Motor neuron (in vitro differentiated cells): ENCODE measurements at regions of chr12 and their contacts with region 1.

Region 1: GRCh38 chr12:22083167-22083566 is 37.1 kb downstream of the CMAS start:
- ATAC-seq: peak in 5 of 8 experiments; percentile 31 to 52 (median 39)
- H3K4me3 ChIP-seq: no peak overlapping the region
- H3K27ac ChIP-seq: no peak overlapping the region
- H3K4me1 ChIP-seq: no peaks in the 10 kb centered on the region

Region 2: GRCh38 chr12:22334410-22335290 is 251.5 kb after region 1 on chr12 and contains the start of gene ST8SIA1:
- in situ Hi-C with region 1: loop called in 6 of 9 experiments (anchors 25 kb)
- ATAC-seq: peak; percentile 13 to 80 (median 73)
- H3K4me3 ChIP-seq: peak within 1 kb of the TSS; percentile 58 to 76 (median 70)
- H3K27ac ChIP-seq: peak within 1 kb of the TSS; percentile 83 to 84
- H3K4me1 ChIP-seq: peaks cover 5 to 25% of the 10 kb centered on the region in 2 donors
- total RNA-seq, gene ST8SIA1: 0.10 to 31.3 (median 17.6) TPM in 7 of 8 experiments, not detected in the other

Region 3: GRCh38 chr12:22443379-22444316 is 360.5 kb after region 1 on chr12:
- in situ Hi-C with region 1: loop called in 5 of 9 experiments (anchors 25 kb)
- ATAC-seq: peak; percentile 99 to 100 (median 100)
- H3K4me3 ChIP-seq: no peak overlapping the region
- H3K27ac ChIP-seq: no peak overlapping the region
- H3K4me1 ChIP-seq: no peaks in the 10 kb centered on the region